ENCODE measurements at regions of chr1 and their contacts with region 1.

Region 1: GRCh38 chr1:166432655-166433054 is 265.9 kb upstream of the FAM78B start:
- DNase-seq: no peak
- ATAC-seq: no peak
- H3K4me3 ChIP-seq: no peak overlapping the region
- H3K27ac ChIP-seq: no peak overlapping the region
- H3K4me1 ChIP-seq: no peaks in the 10 kb centered on the region
- H3K27me3 ChIP-seq: no peaks in the 10 kb centered on the region
- CTCF ChIP-seq: no peak
- POLR2A ChIP-seq: no peak

Region 2: DNA sequence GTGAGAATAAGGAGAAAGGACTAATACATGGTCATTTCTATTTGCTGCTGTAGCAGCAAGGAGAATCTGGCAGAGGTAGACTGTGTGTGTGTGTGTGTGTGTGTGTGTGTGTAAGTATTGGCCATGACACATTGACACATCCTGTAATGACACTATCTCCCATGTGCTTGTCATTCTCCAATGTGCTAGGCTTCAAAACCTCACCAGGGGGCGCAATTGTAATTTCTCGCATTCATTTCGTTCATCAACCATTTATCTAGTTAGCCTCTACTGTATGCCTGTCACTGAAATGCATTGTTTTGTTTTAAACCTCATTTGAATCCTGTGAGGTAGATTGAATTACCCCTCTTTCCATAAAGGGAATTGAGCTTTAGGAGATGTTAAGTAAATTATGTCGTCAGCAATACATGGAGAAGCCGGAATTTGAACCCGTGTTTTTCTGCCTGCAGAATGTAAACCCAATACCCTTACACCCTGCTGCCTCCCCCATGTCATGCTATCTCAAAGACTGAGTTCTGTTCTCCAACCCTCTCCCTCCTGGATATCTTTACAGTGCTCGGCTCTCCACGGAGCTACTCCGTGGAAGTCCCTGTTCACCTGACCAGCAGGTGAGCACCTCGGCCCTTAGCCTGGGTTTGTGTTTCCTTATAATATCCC is 504.5 kb before region 1 on chr1:
- in situ Hi-C with region 1: loop called in 2 of 4 experiments (anchors 5 to 10 kb)
- intact Hi-C with region 1: loop called (anchors 1 kb)
- DNase-seq: peak in 1 of 2 donors; percentile 24
- ATAC-seq: peak; percentile 59 to 72
- H3K4me3 ChIP-seq: no peak overlapping the region
- H3K27ac ChIP-seq: no peak overlapping the region
- H3K4me1 ChIP-seq: no peaks in the 10 kb centered on the region
- H3K27me3 ChIP-seq: no peaks in the 10 kb centered on the region
- CTCF ChIP-seq: peak; percentile 47 to 68 (median 67)
- POLR2A ChIP-seq: no peak

Region 3: GRCh38 chr1:165933446-165934178 is 499.0 kb before region 1 on chr1:
- in situ Hi-C with region 1: loop called in 2 of 4 experiments (anchors 5 to 10 kb)
- intact Hi-C with region 1: loop called (anchors 1 kb)
- DNase-seq: no peak
- ATAC-seq: no peak
- H3K4me3 ChIP-seq: no peak overlapping the region
- H3K27ac ChIP-seq: no peak overlapping the region
- H3K4me1 ChIP-seq: no peaks in the 10 kb centered on the region
- H3K27me3 ChIP-seq: no peaks in the 10 kb centered on the region
- CTCF ChIP-seq: no peak
- POLR2A ChIP-seq: no peak

Measured in gastrocnemius medialis (tissue), 4 donors.